HepG2 (cell line): ENCODE measurements at regions of chrX and their contacts with region 1.

Region 1: DNA sequence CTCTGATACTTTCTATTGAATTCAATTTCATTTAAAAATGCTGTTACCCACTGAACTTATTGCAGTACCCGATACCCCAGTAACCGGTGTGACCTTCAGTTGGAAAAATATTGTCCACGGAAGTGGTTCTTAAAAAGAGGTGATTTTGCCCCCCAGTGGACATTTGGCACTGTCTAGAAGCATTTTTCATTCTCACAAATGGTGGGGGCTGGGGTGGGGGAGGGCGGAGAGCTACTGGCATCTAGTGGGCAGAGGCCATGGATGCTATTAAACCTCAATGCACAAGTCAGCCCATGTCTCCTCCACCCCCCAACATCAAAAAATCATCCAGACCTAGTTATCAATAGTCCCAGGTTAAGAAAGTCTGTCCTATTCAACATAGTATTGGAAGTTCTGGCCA is 19.6 kb upstream of the CHM start:
- DNase-seq: peak; percentile 40
- ATAC-seq: peak; percentile 83
- H3K4me3 ChIP-seq: no peak overlapping the region
- H3K27ac ChIP-seq: no peak overlapping the region
- H3K4me1 ChIP-seq: no peaks in the 10 kb centered on the region
- H3K27me3 ChIP-seq: no peaks in the 10 kb centered on the region
- CTCF ChIP-seq: peak; percentile 30
- EP300 ChIP-seq: no peak
- POLR2A ChIP-seq: no peak
- RAD21 ChIP-seq: 0 out of 2 replicates have a peak, but pooled peaks have one; percentile 20

Region 2: GRCh38 chrX:85851418-85851817 is 215.6 kb before region 1 on chrX:
- CTCF ChIA-PET with region 1: interaction called, 7 read pairs
- POLR2A ChIA-PET with region 1: no interaction called
- in situ Hi-C with region 1: loop called (anchors 25 kb)
- intact Hi-C with region 1: loop called (anchors 1 kb)
- DNase-seq: peak; percentile 14
- ATAC-seq: peak; percentile 89
- H3K4me3 ChIP-seq: no peak overlapping the region
- H3K27ac ChIP-seq: no peak overlapping the region
- H3K4me1 ChIP-seq: no peaks in the 10 kb centered on the region
- H3K27me3 ChIP-seq: no peaks in the 10 kb centered on the region; a peak in 1 of 5 replicates
- CTCF ChIP-seq: peak; percentile 70
- EP300 ChIP-seq: no peak
- POLR2A ChIP-seq: no peak
- RAD21 ChIP-seq: no peak

Region 3: DNA sequence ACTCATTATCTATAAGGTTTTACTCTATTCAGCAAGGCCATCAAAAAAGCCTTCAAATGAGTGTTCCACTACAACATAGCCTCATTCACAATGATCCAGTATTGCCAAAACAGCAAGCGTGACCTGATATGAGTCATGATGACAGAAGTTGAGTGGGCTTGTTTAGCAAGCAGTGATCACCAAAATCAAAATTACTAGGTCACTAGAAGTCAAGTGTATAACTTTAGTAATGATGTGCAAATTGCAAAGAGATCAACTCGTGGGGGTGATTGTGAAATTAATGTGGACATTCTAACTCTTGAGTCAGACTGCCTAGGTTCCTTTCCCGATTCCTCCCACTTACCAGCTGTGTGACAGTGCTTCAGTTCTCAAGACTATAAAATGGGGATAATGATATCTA is 144.2 kb before region 1 on chrX:
- CTCF ChIA-PET with region 1: no interaction called
- POLR2A ChIA-PET with region 1: no interaction called
- in situ Hi-C with region 1: no loop called
- intact Hi-C with region 1: loop called (anchors 10 kb)
- DNase-seq: no peak
- ATAC-seq: no peak
- H3K4me3 ChIP-seq: no peak overlapping the region
- H3K27ac ChIP-seq: no peak overlapping the region
- H3K4me1 ChIP-seq: no peaks in the 10 kb centered on the region
- H3K27me3 ChIP-seq: no peaks in the 10 kb centered on the region
- CTCF ChIP-seq: no peak
- EP300 ChIP-seq: no peak
- POLR2A ChIP-seq: no peak
- RAD21 ChIP-seq: no peak

Region 4: GRCh38 chrX:85988353-85988752 is 78.6 kb before region 1 on chrX:
- CTCF ChIA-PET with region 1: no interaction called
- POLR2A ChIA-PET with region 1: no interaction called
- in situ Hi-C with region 1: no loop called
- intact Hi-C with region 1: no loop called
- DNase-seq: no peak
- ATAC-seq: no peak
- H3K4me3 ChIP-seq: no peak overlapping the region
- H3K27ac ChIP-seq: no peak overlapping the region
- H3K4me1 ChIP-seq: peaks cover 8% of the 10 kb centered on the region
- H3K27me3 ChIP-seq: no peaks in the 10 kb centered on the region
- CTCF ChIP-seq: no peak
- EP300 ChIP-seq: no peak
- POLR2A ChIP-seq: no peak
- RAD21 ChIP-seq: no peak